ENCODE measurements at regions of chr7 and their contacts with region 1.

Region 1: DNA sequence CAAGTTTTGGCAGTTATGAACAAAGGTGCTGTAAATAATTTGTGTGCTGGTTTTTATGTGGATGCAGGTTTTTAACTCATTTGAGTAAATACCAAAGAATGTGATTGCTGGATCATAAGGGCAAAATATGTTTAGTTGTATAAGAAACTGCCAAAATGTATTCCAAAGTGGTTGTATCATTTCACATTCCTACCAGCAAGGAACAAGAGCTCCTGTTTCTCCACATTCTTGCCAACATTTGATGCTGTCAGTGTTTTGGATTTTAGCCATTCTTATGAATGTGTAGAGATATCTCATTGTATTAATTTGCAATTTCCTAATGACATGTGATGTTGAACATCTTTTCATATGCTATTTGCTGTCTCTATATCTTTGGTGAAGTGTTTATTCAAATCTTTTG is 207.3 kb upstream of the LRGUK start:
- DNase-seq: no peak
- H3K4me3 ChIP-seq: no peak overlapping the region
- H3K27ac ChIP-seq: no peak overlapping the region
- H3K4me1 ChIP-seq: no peaks in the 10 kb centered on the region
- H3K27me3 ChIP-seq: no peaks in the 10 kb centered on the region
- CTCF ChIP-seq: no peak

Region 2: GRCh38 chr7:132865366-132866143 is 1054.3 kb before region 1 on chr7:
- intact Hi-C with region 1: loop called (anchors 10 kb)
- DNase-seq: no peak
- H3K4me3 ChIP-seq: no peak overlapping the region
- H3K27ac ChIP-seq: no peak overlapping the region
- H3K4me1 ChIP-seq: no peaks in the 10 kb centered on the region
- H3K27me3 ChIP-seq: no peaks in the 10 kb centered on the region
- CTCF ChIP-seq: no peak

Region 3: GRCh38 chr7:133196856-133197612 is 722.8 kb before region 1 on chr7:
- intact Hi-C with region 1: no loop called
- DNase-seq: no peak
- H3K4me3 ChIP-seq: no peak overlapping the region
- H3K27ac ChIP-seq: no peak overlapping the region
- H3K4me1 ChIP-seq: no peaks in the 10 kb centered on the region
- H3K27me3 ChIP-seq: no peaks in the 10 kb centered on the region
- CTCF ChIP-seq: no peak

Region 4: GRCh38 chr7:133763076-133763640 is 156.7 kb before region 1 on chr7:
- intact Hi-C with region 1: no loop called
- DNase-seq: no peak
- H3K4me3 ChIP-seq: no peak overlapping the region
- H3K27ac ChIP-seq: no peak overlapping the region
- H3K4me1 ChIP-seq: no peaks in the 10 kb centered on the region
- H3K27me3 ChIP-seq: no peaks in the 10 kb centered on the region
- CTCF ChIP-seq: no peak